ENCODE measurements at regions of chr18 and their contacts with region 1.

Region 1: DNA sequence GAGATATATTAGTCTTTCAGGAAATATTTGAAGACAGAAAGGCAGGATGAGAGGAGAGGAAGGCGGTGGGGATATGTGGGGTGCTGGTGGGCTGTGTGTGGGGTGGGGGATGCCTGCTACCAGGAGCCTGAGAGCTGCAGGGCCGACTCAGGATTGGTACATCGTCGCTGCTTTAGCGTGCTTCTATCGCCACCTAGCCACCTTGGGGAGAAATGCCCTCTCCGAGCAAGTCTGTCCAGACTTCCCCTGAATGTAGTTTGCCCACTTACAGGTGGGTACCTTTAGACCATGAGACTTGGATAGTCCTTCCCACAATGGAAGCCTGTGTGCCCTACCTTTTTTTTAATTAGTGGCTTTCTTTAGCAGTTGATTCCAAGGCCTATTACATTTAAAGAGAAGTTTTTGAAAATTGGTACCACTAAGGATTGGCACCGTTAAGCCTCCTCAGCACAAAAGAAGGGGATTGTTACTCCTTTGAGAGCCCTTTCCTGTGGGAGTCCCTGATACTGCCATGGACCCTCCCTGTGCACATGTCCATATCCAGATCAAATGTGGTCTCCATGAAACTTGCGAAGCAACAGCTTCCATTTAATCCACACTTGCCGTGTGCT is 114.1 kb upstream of the NDUFV2 start:
- DNase-seq: peak; percentile 27 to 60 (median 49)
- H3K4me3 ChIP-seq: no peak overlapping the region
- H3K27ac ChIP-seq: no peak overlapping the region
- H3K4me1 ChIP-seq: no peaks in the 10 kb centered on the region
- H3K27me3 ChIP-seq: no peaks in the 10 kb centered on the region
- CTCF ChIP-seq: peak; percentile 30 to 53 (median 36)
- EP300 ChIP-seq: no peak
- POLR2A ChIP-seq: no peak

Region 2: DNA sequence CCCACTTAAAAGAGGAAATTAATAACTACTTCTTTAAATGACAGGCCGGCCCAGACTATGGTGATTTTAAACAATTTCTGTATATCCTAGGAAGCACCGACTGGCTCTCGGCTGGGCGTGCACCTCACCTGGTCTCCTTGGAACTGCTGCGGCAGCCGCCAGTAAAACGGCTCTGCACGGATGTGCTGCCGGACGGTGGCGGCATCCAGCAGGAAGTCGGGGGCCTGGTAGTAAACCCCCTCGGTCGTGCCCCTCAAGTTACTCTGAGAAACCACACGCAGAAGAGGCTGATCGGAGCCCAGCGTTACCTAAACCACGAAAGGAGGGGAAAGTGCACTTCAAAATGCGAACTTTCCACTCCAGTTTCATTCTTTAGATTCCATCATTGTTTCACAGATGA is 1977.2 kb before region 1 on chr18:
- intact Hi-C with region 1: loop called in 1 of 4 experiments (anchors 5 kb)
- DNase-seq: no peak
- H3K4me3 ChIP-seq: no peak overlapping the region
- H3K27ac ChIP-seq: no peak overlapping the region
- H3K4me1 ChIP-seq: peaks cover 5% of the 10 kb centered on the region
- H3K27me3 ChIP-seq: no peaks in the 10 kb centered on the region
- CTCF ChIP-seq: no peak
- EP300 ChIP-seq: no peak
- POLR2A ChIP-seq: no peak

Region 3: DNA sequence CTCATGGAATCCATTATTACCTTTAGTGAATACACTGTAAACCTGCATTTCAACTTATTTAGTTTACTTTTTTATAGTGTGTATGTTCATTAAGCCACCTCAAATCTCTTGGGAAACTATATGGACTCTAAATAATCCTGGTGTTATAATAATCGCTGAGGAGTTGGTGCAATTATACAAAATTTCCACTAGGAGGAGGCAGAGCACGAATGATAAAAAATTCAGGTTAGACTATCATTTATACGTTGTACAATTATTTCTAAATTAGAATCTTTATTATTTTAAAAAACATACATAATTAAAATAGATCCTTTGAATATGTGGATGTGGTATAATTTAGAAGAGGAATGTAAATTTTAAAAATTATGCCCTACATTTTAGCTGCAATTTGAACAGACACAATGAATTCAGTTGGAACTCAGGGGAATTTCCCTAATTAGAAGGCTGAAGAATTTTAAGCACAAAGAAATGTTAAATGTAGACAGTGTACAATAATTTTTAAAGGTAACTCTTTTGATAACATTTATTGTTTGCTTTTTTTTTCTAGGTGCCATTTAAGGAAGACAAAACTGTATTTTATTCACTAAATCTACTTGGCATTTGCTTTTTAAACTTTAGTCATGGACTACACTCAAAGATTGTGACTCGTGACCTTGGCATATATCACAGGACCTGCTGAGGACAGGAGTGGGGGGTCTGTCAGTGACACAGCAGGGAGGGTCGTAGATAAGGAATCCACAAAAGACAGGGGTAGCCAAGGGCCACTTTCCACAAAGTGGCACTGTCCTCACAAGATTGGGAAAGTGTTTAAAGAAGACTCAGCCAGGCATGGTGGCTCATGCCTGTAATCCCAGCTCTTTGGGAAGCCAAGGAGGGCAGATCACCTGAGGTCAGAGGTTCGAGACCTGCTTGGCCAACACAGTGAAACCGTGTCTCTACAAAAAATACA is 333.6 kb before region 1 on chr18:
- intact Hi-C with region 1: loop called in 3 of 4 experiments (anchors 2 to 10 kb)
- DNase-seq: no peak
- H3K4me3 ChIP-seq: no peak overlapping the region
- H3K27ac ChIP-seq: no peak overlapping the region
- H3K4me1 ChIP-seq: peaks cover 2% of the 10 kb centered on the region
- H3K27me3 ChIP-seq: no peaks in the 10 kb centered on the region
- CTCF ChIP-seq: peak; percentile 43 to 63 (median 50)
- EP300 ChIP-seq: no peak
- POLR2A ChIP-seq: no peak

Region 4: GRCh38 chr18:8870528-8870927 is 117.8 kb before region 1 on chr18:
- intact Hi-C with region 1: no loop called
- DNase-seq: no peak
- H3K4me3 ChIP-seq: no peak overlapping the region
- H3K27ac ChIP-seq: no peak overlapping the region
- H3K4me1 ChIP-seq: no peaks in the 10 kb centered on the region
- H3K27me3 ChIP-seq: no peaks in the 10 kb centered on the region
- CTCF ChIP-seq: no peak
- EP300 ChIP-seq: no peak
- POLR2A ChIP-seq: no peak

Measured in ovary (tissue), 10 donors.